Heart left ventricle (tissue), 16 donors: ENCODE measurements at regions of chr11 and their contacts with region 1.

Region 1: GRCh38 chr11:70270104-70270876 is at the start of gene PPFIA1:
- DNase-seq: peak; percentile 96 to 98 (median 97)
- ATAC-seq: peak; percentile 98 to 100 (median 99)
- H3K4me3 ChIP-seq: peak within 1 kb of the TSS; percentile 65 to 98 (median 94)
- H3K27ac ChIP-seq: peak within 1 kb of the TSS in 11 of 12 donors; percentile 82 to 95 (median 87)
- H3K4me1 ChIP-seq: peaks cover 0 to 44% (median 26%) of the 10 kb centered on the region in 12 donors
- H3K27me3 ChIP-seq: peaks cover 0 to 8% (median 0%) of the 10 kb centered on the region in 9 donors
- CTCF ChIP-seq: peak in 3 of 12 donors; percentile 7 to 24 (median 11)
- POLR2A ChIP-seq: peak; percentile 91 to 97
- total RNA-seq, gene PPFIA1: 32.2 to 53.1 (median 40.7) TPM

Region 2: DNA sequence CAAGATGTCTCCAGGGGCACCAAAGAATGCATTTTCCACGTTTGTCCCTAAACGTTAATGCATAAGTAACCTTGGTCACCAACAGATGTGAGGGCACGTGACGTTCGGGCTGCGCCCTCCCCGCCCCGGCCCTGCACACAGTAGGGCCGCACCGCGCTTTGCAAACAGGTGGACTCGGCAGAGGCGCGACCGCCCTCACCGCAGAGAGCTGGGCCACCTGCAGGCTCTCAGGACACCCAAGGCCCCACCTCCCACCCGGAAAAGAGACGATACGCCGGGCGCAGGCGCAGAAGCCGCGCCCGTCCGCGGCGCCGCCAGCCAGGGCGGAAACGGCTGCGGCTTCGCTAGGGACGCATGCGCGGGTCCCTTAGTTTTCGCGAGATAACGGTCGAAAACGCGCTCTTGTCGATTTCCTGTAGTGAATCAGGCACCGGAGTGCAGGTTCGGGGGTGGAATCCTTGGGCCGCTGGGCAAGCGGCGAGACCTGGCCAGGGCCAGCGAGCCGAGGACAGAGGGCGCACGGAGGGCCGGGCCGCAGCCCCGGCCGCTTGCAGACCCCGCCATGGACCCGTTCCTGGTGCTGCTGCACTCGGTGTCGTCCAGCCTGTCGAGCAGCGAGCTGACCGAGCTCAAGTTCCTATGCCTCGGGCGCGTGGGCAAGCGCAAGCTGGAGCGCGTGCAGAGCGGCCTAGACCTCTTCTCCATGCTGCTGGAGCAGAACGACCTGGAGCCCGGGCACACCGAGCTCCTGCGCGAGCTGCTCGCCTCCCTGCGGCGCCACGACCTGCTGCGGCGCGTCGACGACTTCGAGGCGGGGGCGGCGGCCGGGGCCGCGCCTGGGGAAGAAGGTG is 67.2 kb before region 1 on chr11 and contains the start of gene FADD:
- intact Hi-C with region 1: loop called in 3 of 10 experiments (anchors 2 to 5 kb)
- DNase-seq: peak; percentile 89 to 94 (median 91)
- ATAC-seq: peak; percentile 59 to 89 (median 84)
- H3K4me3 ChIP-seq: peak within 1 kb of the TSS; percentile 67 to 100 (median 85)
- H3K27ac ChIP-seq: peak within 1 kb of the TSS; percentile 51 to 98 (median 92)
- H3K4me1 ChIP-seq: peaks cover 10 to 43% (median 21%) of the 10 kb centered on the region in 12 donors
- H3K27me3 ChIP-seq: no peaks in the 10 kb centered on the region
- CTCF ChIP-seq: peak in 1 of 12 donors; percentile 8
- POLR2A ChIP-seq: peak in 1 of 2 donors; percentile 69
- total RNA-seq, gene FADD: 8.9 to 24.4 (median 10.2) TPM

Region 3: DNA sequence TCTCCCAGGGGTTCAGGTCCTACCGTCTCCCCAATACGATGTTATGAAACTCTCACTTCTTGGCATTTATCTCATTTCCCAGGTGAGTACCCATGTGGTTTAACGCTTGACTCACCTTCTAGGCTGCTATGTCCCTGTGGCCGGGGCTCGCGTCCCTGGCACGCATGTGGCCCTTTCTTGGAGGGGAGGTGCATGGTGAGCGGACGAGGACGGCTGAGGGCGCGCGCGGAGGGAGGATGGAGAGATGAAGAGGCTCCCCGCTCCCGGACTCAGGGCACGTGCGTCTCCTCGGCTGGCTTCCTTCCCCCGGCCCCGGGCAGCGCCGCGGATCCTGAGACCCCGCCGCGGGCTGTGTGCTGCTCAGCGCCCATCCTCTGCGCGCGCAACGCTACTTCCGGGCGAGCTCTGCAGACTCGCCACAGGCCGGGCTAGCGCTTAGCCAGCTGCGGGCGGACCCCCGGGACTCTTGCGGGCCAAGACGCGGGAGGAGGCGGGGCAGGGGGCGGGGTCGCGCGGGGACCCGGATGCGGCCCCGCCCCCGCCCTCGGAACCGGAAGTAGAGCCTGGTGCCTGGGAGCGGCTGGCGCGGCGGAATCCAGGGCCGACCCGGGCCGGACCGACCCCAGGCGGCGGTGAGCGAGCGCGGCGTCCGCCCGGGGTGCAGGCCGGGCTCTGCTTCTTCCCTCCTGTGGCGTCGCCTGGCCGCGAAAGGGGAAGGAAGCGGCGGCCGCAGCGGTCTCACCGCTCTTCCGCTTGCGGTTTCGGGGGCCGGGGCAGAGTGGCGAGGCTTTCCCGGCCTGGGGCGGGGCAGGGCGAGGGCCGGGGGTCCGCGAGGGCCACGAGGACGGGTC is 127.9 kb after region 1 on chr11 and contains the start of gene CTTN:
- intact Hi-C with region 1: loop called in 4 of 10 experiments (anchors 2 to 10 kb)
- DNase-seq: peak; percentile 84 to 92 (median 88)
- ATAC-seq: peak; percentile 37 to 86 (median 82)
- H3K4me3 ChIP-seq: peak within 1 kb of the TSS; percentile 63 to 98 (median 86)
- H3K27ac ChIP-seq: peak within 1 kb of the TSS; percentile 64 to 93 (median 87)
- H3K4me1 ChIP-seq: peaks cover 3 to 51% (median 30%) of the 10 kb centered on the region in 12 donors
- H3K27me3 ChIP-seq: peaks cover 0 to 45% (median 0%) of the 10 kb centered on the region in 9 donors
- CTCF ChIP-seq: peak in 1 of 12 donors; percentile 10
- POLR2A ChIP-seq: peak in 1 of 2 donors; percentile 82
- total RNA-seq, gene CTTN: 109 to 186 (median 143) TPM